Thyroid gland (tissue), 4 donors: ENCODE measurements at regions of chr12 and their contacts with region 1.

Region 1: DNA sequence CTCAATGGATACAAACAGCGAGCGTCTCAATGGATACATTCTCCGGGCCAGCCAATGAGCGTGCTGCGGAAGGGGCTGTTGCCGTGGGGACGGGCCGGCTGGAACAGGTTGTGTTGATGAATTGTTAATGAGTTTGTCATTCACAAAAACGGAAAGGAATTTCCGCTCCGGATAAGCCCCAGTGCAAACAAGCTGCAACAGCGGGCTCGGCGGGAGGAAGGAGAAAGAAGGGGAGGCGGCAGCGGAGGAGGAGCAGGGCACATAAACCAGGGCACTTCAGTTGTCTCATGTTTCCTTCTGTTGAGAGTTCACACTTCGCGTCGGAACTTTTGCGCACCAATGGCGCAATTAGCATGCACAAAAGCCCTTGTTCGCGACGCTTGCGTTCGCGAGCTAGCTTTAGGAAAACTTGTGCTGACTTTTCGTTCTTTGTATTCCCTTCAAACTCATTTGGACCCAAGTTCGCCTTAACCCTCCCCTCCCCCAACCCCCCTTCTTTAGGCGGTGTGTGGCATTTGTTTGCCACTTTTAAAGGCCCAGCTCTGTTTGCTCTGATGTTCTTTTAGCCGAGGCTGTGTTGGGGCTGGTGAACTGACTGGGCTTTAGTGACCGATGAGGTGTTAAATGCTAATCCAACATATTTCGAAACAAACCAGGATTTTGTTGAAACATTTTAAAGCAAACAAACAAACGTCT is at the start of gene DUSP6:
- DNase-seq: peak; percentile 94 to 97
- H3K4me3 ChIP-seq: peak within 1 kb of the TSS; percentile 45 to 74 (median 74)
- H3K27ac ChIP-seq: peak within 1 kb of the TSS; percentile 97 to 99 (median 98)
- H3K4me1 ChIP-seq: peaks cover 27 to 35% of the 10 kb centered on the region in 2 donors
- H3K27me3 ChIP-seq: no peaks in the 10 kb centered on the region
- CTCF ChIP-seq: peak in 1 of 6 experiments; percentile 18
- POLR2A ChIP-seq: peak in 1 of 2 donors; percentile 98
- total RNA-seq, gene DUSP6: 31.0 to 40.2 (median 33.8) TPM

Region 2: GRCh38 chr12:89225808-89226411 is 126.7 kb before region 1 on chr12:
- intact Hi-C with region 1: loop called (anchors 10 kb)
- DNase-seq: peak; percentile 72
- H3K4me3 ChIP-seq: no peak overlapping the region
- H3K27ac ChIP-seq: peak overlapping the region; percentile 54 to 95 (median 81)
- H3K4me1 ChIP-seq: peaks cover 19 to 29% of the 10 kb centered on the region in 2 donors
- H3K27me3 ChIP-seq: no peaks in the 10 kb centered on the region
- CTCF ChIP-seq: no peak
- POLR2A ChIP-seq: peak in 1 of 2 donors; percentile 57

Region 3: GRCh38 chr12:89288959-89289358 is 63.7 kb before region 1 on chr12:
- intact Hi-C with region 1: no loop called
- DNase-seq: no peak
- H3K4me3 ChIP-seq: no peak overlapping the region
- H3K27ac ChIP-seq: no peak overlapping the region
- H3K4me1 ChIP-seq: no peaks in the 10 kb centered on the region
- H3K27me3 ChIP-seq: no peaks in the 10 kb centered on the region
- CTCF ChIP-seq: no peak
- POLR2A ChIP-seq: no peak

Region 4: GRCh38 chr12:89456565-89456964 is 103.9 kb after region 1 on chr12:
- intact Hi-C with region 1: loop called (anchors 5 kb)
- DNase-seq: no peak
- H3K4me3 ChIP-seq: no peak overlapping the region
- H3K27ac ChIP-seq: no peak overlapping the region
- H3K4me1 ChIP-seq: peaks cover 28 to 29% of the 10 kb centered on the region in 2 donors
- H3K27me3 ChIP-seq: no peaks in the 10 kb centered on the region
- CTCF ChIP-seq: no peak
- POLR2A ChIP-seq: no peak